IMR-90 (cell line): ENCODE measurements at regions of chr18 and their contacts with region 1.

Region 1: DNA sequence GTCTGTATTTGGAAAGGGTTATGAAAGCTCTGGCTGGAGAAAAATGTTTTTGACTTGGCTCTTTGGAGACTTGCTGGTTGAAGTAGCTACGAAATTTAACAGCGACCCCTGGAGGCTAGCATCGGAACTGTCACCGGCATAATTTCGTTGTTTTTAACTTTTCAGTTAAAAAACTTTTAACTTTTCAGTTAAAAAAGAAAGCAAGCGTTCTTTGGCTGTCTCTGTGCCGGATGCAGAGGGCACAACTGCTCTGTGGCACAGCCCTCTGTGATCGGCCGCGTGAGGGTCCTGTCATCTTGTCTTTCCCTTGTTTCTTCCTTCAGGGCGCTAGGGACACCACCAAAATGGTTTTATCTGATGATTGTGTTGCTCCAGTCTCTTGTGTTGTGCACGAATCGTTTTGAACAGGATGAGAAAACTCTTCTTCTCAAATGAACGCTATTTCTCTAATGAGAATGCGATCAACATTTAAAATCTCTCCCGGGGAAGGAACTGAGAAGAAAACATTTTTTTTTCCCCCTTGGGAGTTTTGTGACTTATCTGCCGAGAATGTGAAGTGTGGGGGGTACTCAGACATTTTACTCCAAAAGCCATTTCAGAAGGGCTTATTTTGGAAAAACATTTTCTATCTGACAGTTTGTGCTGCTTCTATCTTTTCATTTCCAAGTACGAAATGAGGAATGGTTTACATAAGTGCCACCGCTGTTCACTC is 57.1 kb downstream of the ADCYAP1 start:
- DNase-seq: peak; percentile 35
- ATAC-seq: peak; percentile 59
- H3K4me3 ChIP-seq: peak overlapping the region; percentile 44
- H3K27ac ChIP-seq: no peak overlapping the region
- H3K4me1 ChIP-seq: no peaks in the 10 kb centered on the region
- H3K27me3 ChIP-seq: no peaks in the 10 kb centered on the region
- CTCF ChIP-seq: peak; percentile 75
- POLR2A ChIP-seq: no peak
- RAD21 ChIP-seq: peak; percentile 39

Region 2: GRCh38 chr18:275486-275885 is 686.3 kb before region 1 on chr18:
- CTCF ChIA-PET with region 1: no interaction called
- POLR2A ChIA-PET with region 1: no interaction called
- dilution Hi-C with region 1: no loop called
- in situ Hi-C with region 1: no loop called
- intact Hi-C with region 1: no loop called
- DNase-seq: no peak
- ATAC-seq: no peak
- H3K4me3 ChIP-seq: no peak overlapping the region
- H3K27ac ChIP-seq: no peak overlapping the region
- H3K4me1 ChIP-seq: no peaks in the 10 kb centered on the region
- H3K27me3 ChIP-seq: no peaks in the 10 kb centered on the region
- CTCF ChIP-seq: no peak
- POLR2A ChIP-seq: no peak
- RAD21 ChIP-seq: no peak

Region 3: GRCh38 chr18:2547477-2548087 is 1585.8 kb after region 1 on chr18:
- CTCF ChIA-PET with region 1: no interaction called
- POLR2A ChIA-PET with region 1: no interaction called
- dilution Hi-C with region 1: no loop called
- in situ Hi-C with region 1: no loop called
- intact Hi-C with region 1: loop called (anchors 10 kb)
- DNase-seq: peak; percentile 71
- ATAC-seq: peak; percentile 89
- H3K4me3 ChIP-seq: no peak overlapping the region
- H3K27ac ChIP-seq: no peak overlapping the region
- H3K4me1 ChIP-seq: no peaks in the 10 kb centered on the region
- H3K27me3 ChIP-seq: no peaks in the 10 kb centered on the region
- CTCF ChIP-seq: peak; percentile 66
- POLR2A ChIP-seq: no peak
- RAD21 ChIP-seq: peak; percentile 64